ENCODE measurements at regions of chr1 and their contacts with region 1.

Region 1: GRCh38 chr1:78869136-78869535 is 137.4 kb downstream of the ADGRL4 start:
- DNase-seq: no peak

Region 2: GRCh38 chr1:78855258-78855657 is 13.9 kb before region 1 on chr1:
- intact Hi-C with region 1: loop called in 1 of 2 experiments (anchors 2 kb)
- DNase-seq: no peak

Measured in posterior vena cava (tissue), 2 donors.